ENCODE measurements at regions of chr7 and their contacts with region 1.

Region 1: GRCh38 chr7:113727486-113727885 is 191.3 kb downstream of the PPP1R3A start:
- DNase-seq: no peak
- H3K4me3 ChIP-seq: no peak overlapping the region
- H3K27ac ChIP-seq: no peak overlapping the region
- H3K4me1 ChIP-seq: no peaks in the 10 kb centered on the region
- H3K27me3 ChIP-seq: no peaks in the 10 kb centered on the region
- CTCF ChIP-seq: no peak
- POLR2A ChIP-seq: no peak

Region 2: GRCh38 chr7:113710310-113711106 is 17.0 kb before region 1 on chr7:
- CTCF ChIA-PET with region 1: interaction called, 14 read pairs
- POLR2A ChIA-PET with region 1: no interaction called
- dilution Hi-C with region 1: no loop called
- intact Hi-C with region 1: no loop called
- DNase-seq: peak; percentile 84
- H3K4me3 ChIP-seq: no peak overlapping the region
- H3K27ac ChIP-seq: no peak overlapping the region
- H3K4me1 ChIP-seq: no peaks in the 10 kb centered on the region
- H3K27me3 ChIP-seq: peaks cover 2 to 7% of the 10 kb centered on the region in 2 experiments
- CTCF ChIP-seq: peak; percentile 79 to 86
- POLR2A ChIP-seq: no peak